ENCODE measurements at regions of chr17 and their contacts with region 1.

Region 1: GRCh38 chr17:8041249-8041928 is 2.5 kb downstream of the ALOX15B start:
- DNase-seq: no peak
- ATAC-seq: no peak
- H3K4me3 Mint-ChIP-seq: no peak overlapping the region
- H3K27ac Mint-ChIP-seq: no peak overlapping the region
- H3K4me1 Mint-ChIP-seq: peaks cover 3% of the 10 kb centered on the region
- H3K27me3 Mint-ChIP-seq: peaks cover 31% of the 10 kb centered on the region
- CTCF ChIP-seq: no peak

Region 2: GRCh38 chr17:7862692-7863437 is 178.5 kb before region 1 on chr17:
- CTCF ChIA-PET with region 1: interaction called, 5 read pairs
- POLR2A ChIA-PET with region 1: no interaction called
- intact Hi-C with region 1: loop called (anchors 1 kb)
- DNase-seq: no peak
- ATAC-seq: no peak
- H3K4me3 Mint-ChIP-seq: no peak overlapping the region
- H3K27ac Mint-ChIP-seq: no peak overlapping the region
- H3K4me1 Mint-ChIP-seq: peaks cover 11% of the 10 kb centered on the region
- H3K27me3 Mint-ChIP-seq: no peaks in the 10 kb centered on the region
- CTCF ChIP-seq: peak; percentile 90